Right cardiac atrium (tissue), 5 donors: ENCODE measurements at regions of chr20 and their contacts with region 1.

Region 1: DNA sequence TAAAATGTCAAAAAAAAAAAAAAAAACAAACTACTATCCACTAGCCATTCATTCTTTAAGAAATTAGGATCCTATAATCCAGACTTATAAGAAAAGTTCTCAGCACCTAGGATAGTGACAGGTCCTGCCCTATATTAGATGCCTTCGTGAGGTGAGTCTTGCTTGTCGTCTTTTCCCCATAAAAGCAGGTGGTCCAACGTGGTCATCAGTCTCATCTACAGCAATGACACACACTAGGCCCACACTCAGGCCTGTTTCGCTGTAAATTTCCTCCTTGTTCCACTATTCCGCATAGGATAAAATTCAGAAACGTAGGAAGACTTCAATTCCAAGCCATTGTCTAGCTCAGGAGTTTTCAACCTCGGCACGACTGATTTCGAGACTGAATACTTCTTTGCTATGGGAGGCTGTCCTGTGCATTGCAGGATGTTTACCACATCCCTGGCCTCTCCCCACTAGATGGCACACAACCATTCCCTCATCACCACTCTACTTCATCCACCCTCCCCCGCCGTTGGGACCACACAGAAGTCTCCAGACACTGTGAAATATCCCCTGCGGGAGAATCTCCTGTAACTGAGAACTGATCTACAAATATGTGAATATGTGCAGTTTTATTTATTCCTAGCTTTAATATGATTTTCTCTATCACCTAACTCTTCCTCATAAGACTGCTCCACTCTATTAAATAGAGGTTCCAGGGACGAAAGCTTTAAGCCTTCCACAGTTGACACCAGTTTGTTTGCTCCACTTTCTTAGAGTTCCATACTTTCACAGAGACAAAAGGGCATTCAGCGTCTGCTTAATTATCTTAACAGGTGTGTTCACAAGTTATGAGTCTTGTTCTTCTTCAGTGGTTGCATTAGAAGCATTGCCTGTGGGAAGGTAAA is 346.3 kb downstream of the BMP2 start:
- DNase-seq: peak; percentile 25 to 58 (median 53)
- ATAC-seq: peak; percentile 75 to 76
- H3K4me3 ChIP-seq: no peak overlapping the region
- H3K27ac ChIP-seq: no peak overlapping the region
- H3K4me1 ChIP-seq: no peaks in the 10 kb centered on the region
- H3K27me3 ChIP-seq: no peaks in the 10 kb centered on the region

Region 2: DNA sequence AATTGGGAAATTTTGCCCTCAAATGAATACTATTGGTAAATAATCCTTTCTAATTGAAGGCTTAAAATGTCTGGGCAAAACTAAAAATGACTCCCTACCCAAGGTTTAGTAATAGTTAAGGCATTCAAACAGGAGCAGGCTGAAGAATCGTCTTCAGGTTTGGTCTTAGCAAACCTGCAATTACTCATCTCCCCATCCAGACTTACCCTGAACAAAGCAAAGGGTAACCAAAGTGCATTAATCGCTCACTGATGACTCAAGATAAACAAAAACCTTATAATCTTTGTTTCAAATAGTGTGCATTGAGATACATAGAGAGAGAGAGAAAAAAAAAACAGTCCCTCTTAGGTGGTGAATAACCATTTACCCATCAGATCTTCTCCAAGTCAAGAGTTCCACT is 120.8 kb before region 1 on chr20:
- intact Hi-C with region 1: no loop called
- DNase-seq: no peak
- ATAC-seq: no peak
- H3K4me3 ChIP-seq: no peak overlapping the region
- H3K27ac ChIP-seq: no peak overlapping the region
- H3K4me1 ChIP-seq: no peaks in the 10 kb centered on the region
- H3K27me3 ChIP-seq: no peaks in the 10 kb centered on the region

Region 3: GRCh38 chr20:7161690-7162089 is 47.9 kb after region 1 on chr20:
- intact Hi-C with region 1: loop called in 1 of 4 experiments (anchors 5 kb)
- DNase-seq: peak in 1 of 3 donors; percentile 40
- ATAC-seq: no peak
- H3K4me3 ChIP-seq: no peak overlapping the region
- H3K27ac ChIP-seq: no peak overlapping the region
- H3K4me1 ChIP-seq: no peaks in the 10 kb centered on the region
- H3K27me3 ChIP-seq: no peaks in the 10 kb centered on the region

Region 4: DNA sequence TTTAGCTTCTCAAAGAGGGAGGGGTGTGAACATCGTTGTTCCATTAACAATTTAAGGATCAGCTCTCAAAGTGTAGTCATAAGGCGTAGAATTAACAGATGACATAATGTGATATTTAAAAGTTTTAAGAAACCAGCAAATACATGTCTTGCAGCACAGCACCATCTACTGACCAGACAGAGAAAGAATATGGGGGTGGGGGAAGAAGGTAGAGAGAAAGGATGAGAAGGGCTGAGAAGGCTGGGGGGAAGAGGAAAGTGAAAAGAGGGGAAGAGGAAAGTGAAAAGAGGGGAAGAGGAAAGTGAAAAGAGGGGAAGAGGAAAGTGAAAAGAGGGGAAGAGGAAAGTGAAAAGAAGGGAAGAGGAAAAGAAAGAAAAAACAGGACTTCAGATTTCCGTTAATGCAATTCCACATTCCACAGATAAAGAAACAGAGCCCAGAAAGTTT is 745.6 kb after region 1 on chr20:
- intact Hi-C with region 1: loop called in 1 of 4 experiments (anchors 10 kb)
- DNase-seq: no peak
- ATAC-seq: peak; percentile 74 to 88
- H3K4me3 ChIP-seq: no peak overlapping the region
- H3K27ac ChIP-seq: no peak overlapping the region
- H3K4me1 ChIP-seq: no peaks in the 10 kb centered on the region
- H3K27me3 ChIP-seq: no peaks in the 10 kb centered on the region